Dendritic cell treated with granulocyte-macrophage colony-stimulating factor and Interleukin-4, amounts not matched to agents 40 ng/mL and 50 ng/mL, for 4 days (primary cell): ENCODE measurements at regions of chr6 and their contacts with region 1.

Region 1: DNA sequence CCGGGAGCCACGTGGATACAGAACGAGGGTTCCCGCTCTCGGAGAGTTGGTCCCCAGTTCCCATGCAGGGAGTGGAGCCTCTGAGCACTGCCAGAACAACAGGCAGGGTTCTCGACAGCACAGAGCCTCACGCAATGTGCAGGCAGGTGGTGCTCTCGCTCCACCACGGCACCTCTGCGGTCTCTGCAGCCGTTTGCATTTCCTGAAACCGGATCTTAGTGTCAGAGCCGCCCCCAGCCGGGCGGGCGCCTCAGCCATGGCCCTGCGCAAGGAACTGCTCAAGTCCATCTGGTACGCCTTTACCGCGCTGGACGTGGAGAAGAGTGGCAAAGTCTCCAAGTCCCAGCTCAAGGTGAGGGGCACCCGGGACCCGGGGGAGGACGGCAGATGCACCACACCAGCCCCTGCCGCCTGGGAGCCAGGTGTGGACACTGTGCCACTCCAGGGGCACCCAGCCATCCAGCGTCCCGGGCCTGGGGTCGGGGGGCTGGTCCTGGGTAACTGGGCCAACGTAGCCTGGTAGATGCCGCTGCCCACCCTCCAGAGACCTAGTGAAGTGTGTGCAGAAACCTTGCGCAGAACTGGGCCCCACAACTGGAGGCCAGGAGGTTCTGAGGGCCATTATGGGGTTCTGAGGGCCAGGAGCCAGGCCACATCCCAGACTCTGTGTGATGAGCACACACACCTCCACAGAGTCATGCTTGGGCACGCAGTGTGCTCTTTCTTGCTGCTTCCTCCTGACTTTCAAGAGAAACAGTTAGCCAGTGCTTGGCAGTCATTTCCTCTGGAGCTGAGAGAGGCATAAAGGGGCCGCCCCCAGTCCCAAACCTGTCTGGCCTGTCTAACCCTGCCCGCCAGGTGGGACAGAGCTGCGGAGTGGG is at the start of gene DEF6:
- H3K4me3 Mint-ChIP-seq: peak within 1 kb of the TSS; percentile 79
- H3K27ac Mint-ChIP-seq: peak within 1 kb of the TSS; percentile 78
- H3K4me1 Mint-ChIP-seq: peaks cover 56% of the 10 kb centered on the region
- H3K27me3 Mint-ChIP-seq: no peaks in the 10 kb centered on the region

Region 2: DNA sequence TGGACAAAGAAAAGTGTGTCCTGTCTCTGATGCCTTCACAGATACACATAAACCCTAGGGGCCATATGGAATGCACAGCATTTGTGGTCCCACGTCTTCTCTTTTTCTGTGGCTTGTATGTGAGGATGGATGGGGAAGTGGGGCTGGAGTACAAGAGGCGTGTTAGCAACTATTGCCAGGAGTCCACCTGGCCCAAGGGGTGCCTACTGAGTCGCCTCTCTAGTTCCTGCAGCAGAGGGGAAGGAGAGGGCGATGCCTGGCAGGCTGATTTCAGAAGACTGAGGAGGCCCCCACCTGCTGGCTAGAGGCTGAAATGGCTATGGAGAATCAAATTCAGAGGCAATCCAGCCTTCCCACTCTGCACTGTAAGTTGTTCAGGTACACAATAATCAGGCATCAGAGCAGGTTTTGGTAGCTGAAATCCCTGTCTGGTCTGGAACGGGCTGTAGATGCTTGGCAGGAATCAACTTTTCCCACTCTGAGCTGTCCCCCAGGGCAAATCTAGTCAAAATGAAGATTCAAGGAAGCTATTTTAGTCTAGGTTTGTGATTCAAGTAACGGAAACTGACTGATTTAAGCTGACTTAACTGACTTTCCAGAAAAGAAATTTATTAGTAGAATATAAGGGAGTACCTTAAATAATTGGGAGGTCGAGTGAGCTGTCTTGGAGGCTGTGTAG is 29.6 kb after region 1 on chr6:
- intact Hi-C with region 1: loop called (anchors 1 kb)
- H3K4me3 Mint-ChIP-seq: no peak overlapping the region
- H3K27ac Mint-ChIP-seq: no peak overlapping the region
- H3K4me1 Mint-ChIP-seq: peaks cover 9% of the 10 kb centered on the region
- H3K27me3 Mint-ChIP-seq: no peaks in the 10 kb centered on the region

Region 3: GRCh38 chr6:35452186-35453090 is 154.6 kb after region 1 on chr6 and contains the start of gene FANCE:
- intact Hi-C with region 1: loop called (anchors 1 kb)
- H3K4me3 Mint-ChIP-seq: peak within 1 kb of the TSS; percentile 85
- H3K27ac Mint-ChIP-seq: peak within 1 kb of the TSS; percentile 26
- H3K4me1 Mint-ChIP-seq: peaks cover 44% of the 10 kb centered on the region
- H3K27me3 Mint-ChIP-seq: peaks cover 20% of the 10 kb centered on the region

Region 4: DNA sequence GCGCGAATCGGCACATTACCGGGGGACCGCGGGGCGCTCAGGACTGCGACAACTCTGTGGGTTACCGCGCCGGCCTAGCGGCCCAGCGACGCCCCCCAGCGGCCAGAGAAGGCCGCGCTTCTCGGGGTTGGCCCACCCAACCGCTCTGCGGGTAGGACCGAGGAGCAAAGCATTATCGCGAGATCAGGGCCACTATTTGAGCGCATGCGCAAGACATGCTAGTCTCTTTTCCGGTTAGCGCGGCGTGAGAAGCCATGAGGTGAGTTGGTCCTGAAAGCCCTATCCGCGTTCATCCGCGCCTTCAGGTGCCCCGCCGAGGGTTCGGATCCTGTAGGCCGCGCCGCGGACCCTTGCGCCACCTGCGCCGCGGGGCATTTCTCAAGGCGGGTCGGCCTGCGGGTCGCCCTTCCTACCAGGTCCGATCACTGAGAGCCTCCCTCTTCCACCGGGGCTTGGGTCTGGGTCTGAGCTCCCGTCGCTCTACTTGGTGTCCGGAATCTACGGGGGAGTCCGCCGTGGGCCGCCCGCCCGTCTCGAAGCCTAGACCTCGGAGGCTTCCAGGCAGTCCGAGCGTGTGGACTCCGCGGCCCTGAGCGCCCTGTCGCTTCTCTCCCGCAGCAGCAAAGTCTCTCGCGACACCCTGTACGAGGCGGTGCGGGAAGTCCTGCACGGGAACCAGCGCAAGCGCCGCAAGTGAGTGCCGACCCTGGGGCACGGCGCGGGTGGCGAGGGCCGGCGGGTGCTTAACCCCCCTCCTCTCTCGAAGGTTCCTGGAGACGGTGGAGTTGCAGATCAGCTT is 170.5 kb after region 1 on chr6 and contains the start of gene RPL10A:
- intact Hi-C with region 1: loop called (anchors 1 kb)
- H3K4me3 Mint-ChIP-seq: peak within 1 kb of the TSS; percentile 99
- H3K27ac Mint-ChIP-seq: peak within 1 kb of the TSS; percentile 99
- H3K4me1 Mint-ChIP-seq: peaks cover 34% of the 10 kb centered on the region
- H3K27me3 Mint-ChIP-seq: no peaks in the 10 kb centered on the region